ENCODE measurements at regions of chr6 and their contacts with region 1.

Region 1: DNA sequence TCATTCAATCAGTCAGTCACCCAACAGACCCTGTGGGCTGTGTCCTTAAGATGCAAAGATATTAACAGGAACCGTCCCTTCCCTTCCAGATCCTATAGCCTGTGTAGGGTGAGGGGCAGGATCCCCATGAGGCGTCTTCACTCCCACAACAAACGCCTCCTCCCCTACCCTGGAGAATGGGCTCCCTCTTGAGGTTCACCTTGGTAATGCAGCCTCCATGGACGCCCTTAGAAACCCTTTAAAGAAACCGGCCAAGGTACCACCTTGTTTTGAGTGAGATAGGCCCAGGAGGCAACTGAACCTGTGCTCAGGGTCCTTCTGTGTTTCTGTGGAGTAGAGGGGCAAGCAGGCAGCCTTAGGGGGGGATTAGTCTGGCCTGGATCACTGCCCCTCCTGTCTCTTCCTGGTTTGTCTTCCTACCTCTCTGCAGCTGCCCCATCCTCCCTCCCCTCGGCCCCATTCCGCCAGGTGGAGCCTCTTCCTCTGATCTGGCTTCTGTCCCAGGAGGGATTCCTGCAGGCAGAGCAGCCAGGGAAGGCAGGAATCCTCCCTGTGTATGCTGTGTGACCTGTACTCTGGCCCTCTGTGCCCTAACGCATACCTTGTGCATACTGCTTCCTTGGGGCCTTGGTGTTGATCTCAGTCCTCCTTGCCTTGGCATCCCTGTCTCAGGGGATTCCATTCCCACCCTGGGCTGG is 6.6 kb upstream of the GUCA1A start:
- DNase-seq: no peak
- ATAC-seq: peak; percentile 86 to 87
- H3K4me3 ChIP-seq: no peak overlapping the region
- H3K27ac ChIP-seq: no peak overlapping the region
- H3K4me1 ChIP-seq: no peaks in the 10 kb centered on the region
- H3K27me3 ChIP-seq: no peaks in the 10 kb centered on the region
- CTCF ChIP-seq: peak; percentile 97

Region 2: DNA sequence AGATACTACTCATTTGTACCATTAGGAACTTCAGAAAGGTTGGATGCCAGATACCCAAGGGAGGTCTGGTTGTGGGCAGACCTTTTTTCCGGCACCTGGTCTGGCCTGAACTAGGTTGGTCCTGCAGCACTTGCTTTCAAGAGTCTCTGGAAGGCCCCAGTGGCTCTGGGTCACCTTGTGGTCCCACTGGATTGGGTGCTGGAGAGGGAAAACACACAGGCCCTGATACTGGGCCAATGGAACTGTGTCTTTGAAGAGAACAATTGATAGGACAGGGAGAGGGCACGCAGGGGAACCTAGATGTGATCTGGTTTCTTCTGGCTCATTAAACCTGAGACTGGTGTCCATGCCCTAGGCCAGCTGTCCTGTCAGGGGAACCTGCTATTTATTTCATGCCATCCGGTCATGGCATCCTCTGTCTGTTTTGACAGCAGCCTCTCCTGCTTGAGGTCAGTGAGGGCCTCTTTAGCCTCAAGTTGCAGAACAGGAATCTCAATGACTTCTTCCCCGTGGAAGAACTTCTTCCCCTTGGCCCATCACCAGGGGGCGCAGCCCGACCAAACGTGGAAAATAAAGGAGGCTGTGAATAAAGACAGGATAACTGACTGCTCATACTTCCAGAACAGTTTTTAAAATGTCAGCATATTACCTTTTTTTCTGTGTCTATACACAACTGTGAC is 91.3 kb before region 1 on chr6:
- intact Hi-C with region 1: loop called (anchors 10 kb)
- DNase-seq: peak; percentile 84
- ATAC-seq: peak; percentile 87 to 92
- H3K4me3 ChIP-seq: no peak overlapping the region
- H3K27ac ChIP-seq: no peak overlapping the region
- H3K4me1 ChIP-seq: peaks cover 7% of the 10 kb centered on the region
- H3K27me3 ChIP-seq: no peaks in the 10 kb centered on the region
- CTCF ChIP-seq: peak; percentile 83